ENCODE measurements at regions of chr5 and their contacts with region 1.

Region 1: GRCh38 chr5:178279725-178280438 is 47.3 kb upstream of the PHYKPL start:
- DNase-seq: peak; percentile 94
- ATAC-seq: peak; percentile 94 to 97

Region 2: DNA sequence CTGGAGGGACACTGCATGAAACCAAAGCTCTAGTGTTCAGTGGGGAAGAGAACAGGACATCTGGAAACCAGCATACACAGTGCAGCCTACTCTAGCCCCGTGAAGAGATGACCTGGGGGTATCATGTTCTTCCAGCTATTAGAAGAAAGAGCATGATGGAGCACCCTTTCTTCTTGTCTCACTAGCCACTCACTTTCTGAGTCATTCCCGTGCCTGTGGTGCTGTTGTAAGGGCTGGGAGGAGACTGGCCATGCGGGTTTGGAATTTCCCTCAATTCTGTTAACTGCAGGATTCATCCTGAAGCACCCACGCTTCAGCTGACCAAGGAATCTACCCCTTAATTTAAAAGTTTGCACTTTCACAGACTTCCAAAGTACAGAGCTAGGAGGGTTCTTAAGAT is 173.3 kb after region 1 on chr5:
- intact Hi-C with region 1: loop called in 1 of 2 experiments (anchors 10 kb)
- DNase-seq: no peak
- ATAC-seq: no peak

Region 3: DNA sequence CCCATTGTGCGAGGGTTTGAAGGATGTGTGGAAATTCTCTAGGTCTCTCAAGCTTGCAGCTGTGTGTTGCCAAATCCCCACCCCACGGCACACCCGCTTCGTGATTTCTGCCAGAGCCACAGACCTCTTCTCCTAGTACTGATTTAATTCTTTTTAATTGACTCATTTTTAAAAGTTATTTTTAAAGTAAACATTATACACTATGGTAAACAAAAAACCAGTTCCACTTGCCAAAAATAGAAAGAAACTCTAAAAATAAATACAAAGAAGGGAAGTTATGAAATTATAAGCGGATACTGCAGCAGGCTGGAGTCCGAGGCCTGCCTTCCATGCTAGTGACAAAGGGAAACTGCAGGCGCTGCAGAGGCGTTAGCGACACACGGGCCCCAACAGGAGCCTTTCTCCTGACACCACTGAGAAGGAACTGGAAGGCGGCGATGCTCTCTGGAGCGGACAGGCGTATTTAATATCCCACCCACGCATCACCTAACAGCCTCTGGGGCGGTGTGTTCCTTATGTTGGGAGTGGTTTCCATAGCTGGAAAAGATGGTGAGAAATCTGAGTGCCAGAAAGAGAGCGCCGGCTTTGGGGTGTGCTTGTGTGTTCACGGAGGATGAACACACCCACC is 187.8 kb after region 1 on chr5:
- intact Hi-C with region 1: no loop called
- DNase-seq: peak; percentile 59
- ATAC-seq: peak; percentile 62 to 65

Region 4: DNA sequence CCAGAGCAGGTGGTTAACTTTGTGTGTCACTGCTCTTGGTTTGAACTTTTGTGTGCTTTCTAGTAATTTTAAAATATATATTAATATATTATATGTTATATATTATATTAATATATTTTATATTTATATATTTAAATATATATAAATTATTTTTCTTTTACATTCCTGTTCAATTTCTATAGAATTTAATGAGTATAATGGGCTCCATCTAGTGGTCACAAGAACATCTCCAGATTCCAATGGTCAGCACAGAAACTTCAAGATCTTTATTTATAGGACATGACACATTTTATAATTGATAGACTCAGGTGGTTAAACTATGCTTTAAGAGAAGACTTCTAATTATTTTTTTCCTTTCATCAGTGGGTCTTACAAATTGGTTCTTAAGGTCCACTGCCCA is 271.2 kb after region 1 on chr5:
- intact Hi-C with region 1: loop called (anchors 2 to 5 kb)
- DNase-seq: no peak
- ATAC-seq: no peak

Region 5: GRCh38 chr5:178590924-178591423 is 311.1 kb after region 1 on chr5:
- intact Hi-C with region 1: loop called in 1 of 2 experiments (anchors 1 kb)
- DNase-seq: no peak
- ATAC-seq: peak in 1 of 2 donors; percentile 34

Region 6: DNA sequence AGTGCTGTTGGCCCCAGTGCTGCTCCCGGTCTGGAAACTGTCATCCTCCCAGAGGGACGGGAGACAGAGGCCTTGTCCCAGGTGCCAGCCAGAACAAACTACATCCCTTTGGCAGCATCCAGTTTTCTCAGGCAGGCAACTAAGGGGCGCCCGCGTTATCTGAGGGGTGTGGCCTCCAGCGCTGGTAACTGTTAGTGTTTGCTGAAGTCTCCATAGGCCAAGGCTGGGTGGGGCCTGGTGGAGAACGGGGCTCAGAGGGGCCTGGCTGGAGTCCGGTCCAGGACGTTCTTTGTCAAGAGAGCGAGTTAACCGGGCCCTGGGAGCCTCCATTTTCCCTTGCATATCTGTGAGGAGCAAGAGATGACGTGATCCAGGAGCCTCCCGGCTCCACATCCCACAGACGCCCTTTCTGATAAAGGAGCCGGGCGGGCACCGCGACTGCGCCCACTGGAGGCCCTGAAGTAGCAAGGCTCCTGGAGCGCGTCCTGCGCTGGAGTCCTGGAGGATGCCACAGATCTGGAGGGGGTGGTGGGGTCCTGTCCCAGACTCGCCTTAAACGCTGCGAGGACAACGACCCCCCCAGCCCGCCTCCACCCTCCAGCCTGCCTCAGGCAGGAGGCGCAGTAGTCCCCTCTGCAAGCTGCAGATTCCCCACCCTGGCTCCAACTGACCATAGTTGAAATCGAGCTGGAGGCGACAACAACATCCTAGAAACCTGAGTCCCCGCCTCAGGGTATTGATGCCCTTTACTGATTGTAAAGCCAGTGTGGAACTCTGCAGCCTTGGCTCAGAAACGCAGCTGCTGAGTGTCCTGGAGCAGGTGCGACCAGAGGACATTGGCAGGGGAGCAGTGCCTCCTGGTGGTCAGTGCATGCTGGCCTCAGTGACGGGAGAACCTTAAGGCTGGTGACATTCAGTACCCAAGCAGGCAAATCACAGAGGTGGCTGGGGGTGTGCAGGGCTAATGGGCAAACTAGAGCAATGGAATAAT is 559.1 kb after region 1 on chr5:
- intact Hi-C with region 1: loop called in 1 of 2 experiments (anchors 5 kb)
- DNase-seq: peak; percentile 70
- ATAC-seq: peak; percentile 38 to 70

Region 7: GRCh38 chr5:179780362-179780761 is 1500.5 kb after region 1 on chr5:
- intact Hi-C with region 1: no loop called
- DNase-seq: no peak
- ATAC-seq: peak in 1 of 2 donors; percentile 39